ENCODE measurements at regions of chr7 and their contacts with region 1.

Region 1: GRCh38 chr7:77378584-77378983 is 37.6 kb downstream of the GSAP start:
- DNase-seq: no peak
- ATAC-seq: no peak
- H3K4me3 ChIP-seq: no peak overlapping the region
- H3K4me3 Mint-ChIP-seq: no peak overlapping the region
- H3K27ac ChIP-seq: no peak overlapping the region
- H3K27ac Mint-ChIP-seq: no peak overlapping the region
- H3K4me1 ChIP-seq: no peaks in the 10 kb centered on the region
- H3K4me1 Mint-ChIP-seq: no peaks in the 10 kb centered on the region
- H3K27me3 ChIP-seq: no peaks in the 10 kb centered on the region
- H3K27me3 Mint-ChIP-seq: no peaks in the 10 kb centered on the region
- CTCF ChIP-seq: no peak

Region 2: DNA sequence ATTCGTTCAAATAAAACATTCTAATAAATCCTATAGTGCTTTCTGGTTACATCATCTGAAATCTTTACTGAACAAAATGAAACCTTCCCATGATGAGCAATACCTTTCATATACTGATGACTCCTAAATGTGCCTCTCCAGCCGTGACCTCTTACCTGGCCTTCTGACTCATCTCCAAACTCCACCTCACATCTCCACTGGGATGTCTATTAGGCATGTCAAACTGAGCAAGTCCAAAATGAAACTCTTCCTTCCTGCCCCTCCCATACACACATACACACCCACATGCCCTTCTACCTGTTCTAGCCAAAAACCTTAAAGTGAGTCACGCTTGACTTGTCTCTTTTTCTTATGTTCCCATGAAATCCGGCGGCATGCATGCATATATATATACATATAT is 14.7 kb after region 1 on chr7:
- CTCF ChIA-PET with region 1: no interaction called
- POLR2A ChIA-PET with region 1: interaction called, 11 read pairs
- intact Hi-C with region 1: no loop called
- DNase-seq: peak; percentile 15
- ATAC-seq: peak; percentile 56
- H3K4me3 ChIP-seq: no peak overlapping the region
- H3K4me3 Mint-ChIP-seq: peak overlapping the region; percentile 9
- H3K27ac ChIP-seq: peak overlapping the region in 1 of 2 donors; percentile 85
- H3K27ac Mint-ChIP-seq: peak overlapping the region; percentile 92
- H3K4me1 ChIP-seq: peaks cover 22 to 33% of the 10 kb centered on the region in 2 donors
- H3K4me1 Mint-ChIP-seq: peaks cover 40% of the 10 kb centered on the region
- H3K27me3 ChIP-seq: no peaks in the 10 kb centered on the region
- H3K27me3 Mint-ChIP-seq: no peaks in the 10 kb centered on the region
- CTCF ChIP-seq: no peak

Region 3: GRCh38 chr7:77409739-77410547 is 31.4 kb after region 1 on chr7:
- CTCF ChIA-PET with region 1: interaction called, 3 read pairs
- POLR2A ChIA-PET with region 1: interaction called, 5 read pairs
- intact Hi-C with region 1: loop called (anchors 5 kb)
- DNase-seq: no peak
- ATAC-seq: no peak
- H3K4me3 ChIP-seq: no peak overlapping the region
- H3K4me3 Mint-ChIP-seq: no peak overlapping the region
- H3K27ac ChIP-seq: peak overlapping the region in 1 of 2 donors; percentile 30
- H3K27ac Mint-ChIP-seq: peak overlapping the region; percentile 12
- H3K4me1 ChIP-seq: peaks cover 22 to 40% of the 10 kb centered on the region in 2 donors
- H3K4me1 Mint-ChIP-seq: peaks cover 60% of the 10 kb centered on the region
- H3K27me3 ChIP-seq: no peaks in the 10 kb centered on the region
- H3K27me3 Mint-ChIP-seq: no peaks in the 10 kb centered on the region
- CTCF ChIP-seq: no peak

Region 4: GRCh38 chr7:77430927-77431326 is 52.3 kb after region 1 on chr7:
- CTCF ChIA-PET with region 1: no interaction called
- POLR2A ChIA-PET with region 1: no interaction called
- intact Hi-C with region 1: no loop called
- DNase-seq: no peak
- ATAC-seq: no peak
- H3K4me3 ChIP-seq: no peak overlapping the region
- H3K4me3 Mint-ChIP-seq: no peak overlapping the region
- H3K27ac ChIP-seq: no peak overlapping the region
- H3K27ac Mint-ChIP-seq: no peak overlapping the region
- H3K4me1 ChIP-seq: peaks cover 8 to 22% of the 10 kb centered on the region in 2 donors
- H3K4me1 Mint-ChIP-seq: peaks cover 28% of the 10 kb centered on the region
- H3K27me3 ChIP-seq: no peaks in the 10 kb centered on the region
- H3K27me3 Mint-ChIP-seq: no peaks in the 10 kb centered on the region
- CTCF ChIP-seq: no peak

Region 5: GRCh38 chr7:77606562-77606961 is 228.0 kb after region 1 on chr7:
- CTCF ChIA-PET with region 1: no interaction called
- POLR2A ChIA-PET with region 1: interaction called, 10 read pairs
- intact Hi-C with region 1: no loop called
- DNase-seq: no peak
- ATAC-seq: no peak
- H3K4me3 ChIP-seq: no peak overlapping the region
- H3K4me3 Mint-ChIP-seq: no peak overlapping the region
- H3K27ac ChIP-seq: no peak overlapping the region
- H3K27ac Mint-ChIP-seq: no peak overlapping the region
- H3K4me1 ChIP-seq: no peaks in the 10 kb centered on the region
- H3K4me1 Mint-ChIP-seq: no peaks in the 10 kb centered on the region
- H3K27me3 ChIP-seq: no peaks in the 10 kb centered on the region
- H3K27me3 Mint-ChIP-seq: no peaks in the 10 kb centered on the region
- CTCF ChIP-seq: no peak

Region 6: DNA sequence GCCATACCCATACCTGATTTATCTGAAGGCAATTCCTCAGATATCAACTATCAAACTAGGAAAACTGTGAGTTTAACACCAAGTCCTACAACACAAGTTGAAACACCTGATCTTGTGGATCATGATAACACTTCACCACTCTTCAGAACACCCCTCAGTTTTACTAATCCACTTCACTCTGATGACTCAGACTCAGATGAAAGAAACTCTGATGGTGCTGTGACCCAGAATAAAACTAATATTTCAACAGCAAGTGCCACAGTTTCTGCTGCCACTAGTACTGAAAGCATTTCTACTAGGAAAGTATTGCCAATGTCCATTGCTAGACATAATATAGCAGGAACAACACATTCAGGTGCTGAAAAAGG is 248.7 kb after region 1 on chr7:
- CTCF ChIA-PET with region 1: no interaction called
- POLR2A ChIA-PET with region 1: no interaction called
- intact Hi-C with region 1: no loop called
- DNase-seq: no peak
- ATAC-seq: no peak
- H3K4me3 ChIP-seq: no peak overlapping the region
- H3K4me3 Mint-ChIP-seq: no peak overlapping the region
- H3K27ac ChIP-seq: no peak overlapping the region
- H3K27ac Mint-ChIP-seq: no peak overlapping the region
- H3K4me1 ChIP-seq: no peaks in the 10 kb centered on the region
- H3K4me1 Mint-ChIP-seq: no peaks in the 10 kb centered on the region
- H3K27me3 ChIP-seq: no peaks in the 10 kb centered on the region
- H3K27me3 Mint-ChIP-seq: no peaks in the 10 kb centered on the region
- CTCF ChIP-seq: no peak

Measured in B cell (primary cell).